Mucosa of descending colon (tissue), 3 donors: ENCODE measurements at regions of chr1 and their contacts with region 1.

Region 1: GRCh38 chr1:39973503-39974135 is 18.7 kb downstream of the MFSD2A start:
- DNase-seq: peak; percentile 78 to 87 (median 83)
- ATAC-seq: peak; percentile 89
- H3K4me3 ChIP-seq: no peak overlapping the region
- H3K4me1 ChIP-seq: peaks cover 2% of the 10 kb centered on the region
- CTCF ChIP-seq: peak; percentile 86

Region 2: GRCh38 chr1:39816415-39817090 is 157.1 kb before region 1 on chr1:
- intact Hi-C with region 1: loop called (anchors 5 to 10 kb)
- DNase-seq: peak; percentile 71 to 86 (median 77)
- ATAC-seq: peak; percentile 80
- H3K4me3 ChIP-seq: no peak overlapping the region
- H3K4me1 ChIP-seq: peaks cover 24% of the 10 kb centered on the region
- CTCF ChIP-seq: peak; percentile 81

Region 3: DNA sequence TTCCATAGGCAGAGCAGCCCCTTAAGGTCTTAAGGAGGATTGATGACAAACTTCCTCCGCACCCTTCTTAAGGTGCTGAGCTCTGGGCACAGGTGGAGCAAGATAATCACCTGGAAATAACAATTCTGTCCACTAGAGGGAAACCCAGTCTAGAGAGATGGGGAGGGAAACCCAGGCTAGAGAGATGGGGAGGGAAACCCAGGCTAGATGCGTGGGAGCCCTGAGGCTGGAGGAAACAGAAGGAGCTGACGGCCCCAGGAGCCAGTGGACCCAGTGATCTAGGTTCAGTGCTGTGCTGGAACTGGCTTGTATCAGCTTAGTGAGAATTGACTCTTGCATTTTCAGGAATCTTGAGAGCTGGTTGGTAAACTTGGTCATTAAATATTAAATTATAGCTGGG is 54.1 kb before region 1 on chr1:
- intact Hi-C with region 1: loop called (anchors 10 kb)
- DNase-seq: peak in 2 of 3 donors; percentile 46 to 52
- ATAC-seq: peak; percentile 98
- H3K4me3 ChIP-seq: no peak overlapping the region
- H3K4me1 ChIP-seq: no peaks in the 10 kb centered on the region
- CTCF ChIP-seq: no peak